MCF 10A (cell line): ENCODE measurements at regions of chr11 and their contacts with region 1.

Region 1: DNA sequence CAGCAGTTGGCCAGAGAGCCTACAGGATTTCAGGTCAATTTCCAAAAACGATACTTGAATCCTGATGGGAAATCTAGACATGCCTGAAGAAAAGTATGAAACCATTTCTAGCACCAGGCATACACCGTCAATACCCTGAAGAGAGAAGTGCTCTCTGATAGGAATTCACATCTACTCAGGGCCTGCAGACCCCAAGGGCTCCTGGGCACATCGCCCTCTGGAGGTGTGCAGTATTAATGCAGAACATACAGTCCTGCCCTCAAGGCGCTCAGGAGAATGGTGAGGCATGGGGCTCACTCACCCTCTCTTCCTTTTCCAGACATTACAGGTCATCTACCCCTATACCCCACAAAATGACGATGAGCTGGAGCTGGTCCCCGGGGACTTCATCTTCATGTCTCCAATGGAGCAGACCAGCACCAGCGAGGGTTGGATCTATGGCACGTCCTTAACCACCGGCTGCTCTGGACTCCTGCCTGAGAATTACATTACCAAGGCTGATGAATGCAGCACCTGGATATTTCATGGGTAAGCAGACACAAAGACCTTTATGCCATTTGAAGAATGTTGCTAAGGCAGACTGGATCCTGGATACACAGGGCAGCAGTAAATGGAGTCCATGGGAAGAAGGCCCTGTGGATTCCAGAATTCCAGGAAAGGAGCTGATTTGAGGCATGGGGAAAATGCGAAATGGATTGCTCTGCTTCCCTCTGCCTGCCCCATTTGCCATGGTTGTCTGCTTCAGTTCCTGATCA is 49.3 kb upstream of the CRTAM start:
- DNase-seq: no peak
- H3K4me3 Mint-ChIP-seq: no peak overlapping the region
- H3K27ac Mint-ChIP-seq: no peak overlapping the region
- H3K4me1 Mint-ChIP-seq: peaks cover 23% of the 10 kb centered on the region
- H3K27me3 Mint-ChIP-seq: no peaks in the 10 kb centered on the region
- CTCF ChIP-seq: peak; percentile 13

Region 2: GRCh38 chr11:122628810-122629555 is 160.0 kb before region 1 on chr11:
- CTCF ChIA-PET with region 1: interaction called, 112 read pairs
- POLR2A ChIA-PET with region 1: interaction called, 4 read pairs
- intact Hi-C with region 1: no loop called
- DNase-seq: peak; percentile 82
- H3K4me3 Mint-ChIP-seq: no peak overlapping the region
- H3K27ac Mint-ChIP-seq: no peak overlapping the region
- H3K4me1 Mint-ChIP-seq: peaks cover 18% of the 10 kb centered on the region
- H3K27me3 Mint-ChIP-seq: no peaks in the 10 kb centered on the region
- CTCF ChIP-seq: peak; percentile 83

Region 3: GRCh38 chr11:122882857-122883645 is 94.1 kb after region 1 on chr11:
- CTCF ChIA-PET with region 1: no interaction called
- POLR2A ChIA-PET with region 1: no interaction called
- intact Hi-C with region 1: no loop called
- DNase-seq: peak; percentile 53
- H3K4me3 Mint-ChIP-seq: peak overlapping the region; percentile 72
- H3K27ac Mint-ChIP-seq: peak overlapping the region; percentile 92
- H3K4me1 Mint-ChIP-seq: peaks cover 7% of the 10 kb centered on the region
- H3K27me3 Mint-ChIP-seq: no peaks in the 10 kb centered on the region
- CTCF ChIP-seq: no peak